ENCODE measurements at regions of chr5 and their contacts with region 1.

Region 1: DNA sequence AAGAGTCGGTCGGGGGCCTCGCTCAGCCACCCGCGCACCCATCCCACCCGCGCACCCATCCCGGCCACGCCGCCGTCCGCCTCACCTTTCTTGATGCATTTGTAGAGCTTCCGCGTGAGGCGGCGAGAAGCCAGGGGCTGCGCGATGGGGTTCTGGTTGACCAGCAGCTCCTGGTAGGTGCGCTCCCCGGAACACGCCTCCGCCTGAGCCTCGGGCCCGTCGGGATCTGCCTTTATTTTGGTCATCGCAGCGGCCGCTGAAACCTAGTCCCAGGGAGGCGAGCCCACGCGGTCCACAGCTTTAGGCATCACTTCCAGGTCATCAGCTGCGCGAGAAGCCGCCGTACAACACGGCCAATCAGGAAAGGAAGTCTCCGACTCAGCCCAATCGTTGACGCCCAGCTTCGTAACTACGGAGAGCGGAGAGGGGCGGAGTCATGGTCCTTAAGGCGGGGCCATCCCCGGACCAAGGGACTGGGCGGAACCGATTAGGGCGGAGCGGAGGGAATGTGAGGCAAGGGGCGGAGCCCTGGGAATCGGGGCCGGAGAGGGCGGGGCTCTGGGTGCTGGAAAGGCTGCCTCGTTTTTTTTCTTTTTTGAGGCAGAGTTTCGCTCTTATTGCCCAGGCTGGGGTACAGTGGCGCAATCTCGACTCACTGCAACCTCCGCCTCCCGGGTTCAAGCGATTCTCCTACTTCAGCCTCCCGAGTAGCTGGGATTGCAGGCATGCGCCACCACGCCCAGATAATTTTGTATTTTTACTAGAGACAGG is at the start of gene NHP2:
- DNase-seq: peak; percentile 92 to 98 (median 97)
- ATAC-seq: peak; percentile 99
- H3K4me3 ChIP-seq: peak within 1 kb of the TSS; percentile 81 to 94
- H3K4me3 Mint-ChIP-seq: peak within 1 kb of the TSS; percentile 97
- H3K27ac ChIP-seq: peak within 1 kb of the TSS; percentile 51 to 62
- H3K27ac Mint-ChIP-seq: peak within 1 kb of the TSS; percentile 92
- H3K4me1 ChIP-seq: peaks cover 12% of the 10 kb centered on the region
- H3K4me1 Mint-ChIP-seq: peaks cover 26% of the 10 kb centered on the region
- H3K27me3 ChIP-seq: no peaks in the 10 kb centered on the region
- H3K27me3 Mint-ChIP-seq: no peaks in the 10 kb centered on the region
- CTCF ChIP-seq: no peak
- total RNA-seq, gene NHP2: 48.8 to 49.6 TPM

Region 2: DNA sequence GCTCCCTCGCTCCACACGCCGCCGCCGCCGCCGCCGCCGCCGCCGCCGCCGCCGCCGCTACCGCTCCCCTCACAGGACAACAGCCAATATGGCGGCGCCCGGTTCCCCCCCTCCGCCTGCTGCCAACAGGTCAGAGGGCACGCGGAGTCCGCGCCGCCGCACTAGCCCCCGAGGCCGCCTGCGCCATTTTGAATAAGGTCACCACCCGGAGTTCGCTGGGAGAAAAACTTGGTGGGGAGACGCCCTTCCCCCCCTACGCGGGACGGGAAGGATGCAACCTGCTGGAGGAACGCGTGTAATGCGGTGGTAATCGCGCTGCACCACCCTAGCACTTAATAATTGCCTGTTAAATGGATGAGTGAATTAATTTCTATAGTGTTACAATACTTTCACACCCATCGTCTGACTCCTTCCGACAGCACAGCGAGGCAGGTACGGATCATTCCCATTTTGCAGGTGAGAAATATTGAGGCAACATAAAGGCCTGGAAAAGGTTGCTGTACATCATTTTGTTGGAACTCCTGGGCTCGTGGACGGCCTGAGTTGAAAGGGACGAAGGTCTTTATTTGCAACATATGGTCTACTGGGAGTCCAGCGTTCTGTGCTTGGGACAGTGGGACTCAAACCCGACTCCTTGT is 599.2 kb before region 1 on chr5 and contains the start of gene FAM193B:
- CTCF ChIA-PET with region 1: no interaction called
- POLR2A ChIA-PET with region 1: no interaction called
- intact Hi-C with region 1: loop called in 1 of 2 experiments (anchors 5 kb)
- DNase-seq: peak; percentile 88 to 97 (median 94)
- ATAC-seq: peak; percentile 99
- H3K4me3 ChIP-seq: peak within 1 kb of the TSS; percentile 62 to 80
- H3K4me3 Mint-ChIP-seq: peak within 1 kb of the TSS; percentile 89
- H3K27ac ChIP-seq: peak within 1 kb of the TSS; percentile 38 to 49
- H3K27ac Mint-ChIP-seq: peak within 1 kb of the TSS; percentile 82
- H3K4me1 ChIP-seq: peaks cover 20% of the 10 kb centered on the region
- H3K4me1 Mint-ChIP-seq: peaks cover 34% of the 10 kb centered on the region
- H3K27me3 ChIP-seq: no peaks in the 10 kb centered on the region
- H3K27me3 Mint-ChIP-seq: no peaks in the 10 kb centered on the region
- CTCF ChIP-seq: no peak
- total RNA-seq, gene FAM193B: 136 to 141 TPM

Region 3: GRCh38 chr5:178113199-178113787 is 40.5 kb before region 1 on chr5 and contains the start of gene N4BP3:
- CTCF ChIA-PET with region 1: interaction called, 3 read pairs
- POLR2A ChIA-PET with region 1: interaction called, 5 read pairs
- intact Hi-C with region 1: loop called (anchors 1 kb)
- DNase-seq: peak; percentile 60 to 91 (median 81)
- ATAC-seq: peak; percentile 44
- H3K4me3 ChIP-seq: peak within 1 kb of the TSS; percentile 54 to 88
- H3K4me3 Mint-ChIP-seq: peak within 1 kb of the TSS; percentile 90
- H3K27ac ChIP-seq: peak within 1 kb of the TSS; percentile 45 to 51
- H3K27ac Mint-ChIP-seq: peak within 1 kb of the TSS; percentile 93
- H3K4me1 ChIP-seq: peaks cover 45% of the 10 kb centered on the region
- H3K4me1 Mint-ChIP-seq: peaks cover 42% of the 10 kb centered on the region
- H3K27me3 ChIP-seq: no peaks in the 10 kb centered on the region
- H3K27me3 Mint-ChIP-seq: no peaks in the 10 kb centered on the region
- CTCF ChIP-seq: no peak
- total RNA-seq, gene N4BP3: 17.3 to 17.9 TPM

Region 4: DNA sequence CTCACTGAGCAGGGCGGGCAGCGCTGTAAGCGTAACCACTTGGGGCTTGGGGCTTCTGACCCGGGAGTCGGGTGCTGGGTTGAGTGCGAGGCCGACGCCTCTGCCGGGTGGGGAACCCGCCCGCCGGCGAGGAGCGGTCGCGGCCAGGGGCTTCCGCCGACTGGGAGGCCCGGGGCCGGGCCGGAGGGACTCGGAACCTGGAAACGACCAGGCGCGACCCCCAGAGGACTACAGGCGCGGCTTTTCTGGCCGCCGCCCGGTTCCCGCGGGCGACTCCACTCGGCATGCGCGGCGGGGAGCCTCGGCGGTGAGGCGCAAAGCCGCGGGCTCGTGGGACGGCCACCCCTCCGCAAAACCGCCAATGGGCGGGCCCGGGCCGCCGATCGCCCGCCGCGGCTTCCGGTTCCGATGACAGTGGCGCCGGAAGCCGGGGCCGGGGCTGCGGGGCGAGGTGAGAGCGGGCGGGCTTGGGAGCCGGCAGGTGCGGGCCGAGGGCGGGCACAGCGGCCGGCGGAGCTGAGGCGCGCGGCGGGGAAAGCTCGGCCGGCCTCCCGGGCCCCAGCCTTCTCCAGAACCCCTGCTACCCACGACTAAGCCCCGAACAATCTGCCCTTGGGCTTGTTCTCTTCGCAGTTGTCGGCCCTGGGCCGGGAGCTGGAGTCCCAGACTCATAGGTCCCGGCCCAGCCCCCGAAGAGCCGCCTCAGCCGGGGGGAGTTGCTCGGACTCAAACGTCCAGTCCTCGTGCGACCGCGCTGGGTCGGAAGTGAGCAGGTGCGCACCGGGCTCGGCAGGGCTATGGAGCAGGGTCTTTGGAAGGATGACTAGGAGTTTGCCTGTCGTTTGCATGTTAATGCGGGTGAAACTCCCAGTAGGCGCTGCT is 22.9 kb before region 1 on chr5 and contains the start of gene RMND5B:
- CTCF ChIA-PET with region 1: interaction called, 3 read pairs
- POLR2A ChIA-PET with region 1: interaction called, 6 read pairs
- intact Hi-C with region 1: loop called in 1 of 2 experiments (anchors 1 kb)
- DNase-seq: peak; percentile 56 to 88 (median 76)
- ATAC-seq: peak; percentile 82
- H3K4me3 ChIP-seq: peak within 1 kb of the TSS; percentile 66 to 85
- H3K4me3 Mint-ChIP-seq: peak within 1 kb of the TSS; percentile 83
- H3K27ac ChIP-seq: peak within 1 kb of the TSS; percentile 66 to 69
- H3K27ac Mint-ChIP-seq: peak within 1 kb of the TSS; percentile 75
- H3K4me1 ChIP-seq: peaks cover 20% of the 10 kb centered on the region
- H3K4me1 Mint-ChIP-seq: peaks cover 33% of the 10 kb centered on the region
- H3K27me3 ChIP-seq: no peaks in the 10 kb centered on the region
- H3K27me3 Mint-ChIP-seq: no peaks in the 10 kb centered on the region
- CTCF ChIP-seq: no peak
- total RNA-seq, gene RMND5B: 9.3 to 12.6 TPM

Region 5: DNA sequence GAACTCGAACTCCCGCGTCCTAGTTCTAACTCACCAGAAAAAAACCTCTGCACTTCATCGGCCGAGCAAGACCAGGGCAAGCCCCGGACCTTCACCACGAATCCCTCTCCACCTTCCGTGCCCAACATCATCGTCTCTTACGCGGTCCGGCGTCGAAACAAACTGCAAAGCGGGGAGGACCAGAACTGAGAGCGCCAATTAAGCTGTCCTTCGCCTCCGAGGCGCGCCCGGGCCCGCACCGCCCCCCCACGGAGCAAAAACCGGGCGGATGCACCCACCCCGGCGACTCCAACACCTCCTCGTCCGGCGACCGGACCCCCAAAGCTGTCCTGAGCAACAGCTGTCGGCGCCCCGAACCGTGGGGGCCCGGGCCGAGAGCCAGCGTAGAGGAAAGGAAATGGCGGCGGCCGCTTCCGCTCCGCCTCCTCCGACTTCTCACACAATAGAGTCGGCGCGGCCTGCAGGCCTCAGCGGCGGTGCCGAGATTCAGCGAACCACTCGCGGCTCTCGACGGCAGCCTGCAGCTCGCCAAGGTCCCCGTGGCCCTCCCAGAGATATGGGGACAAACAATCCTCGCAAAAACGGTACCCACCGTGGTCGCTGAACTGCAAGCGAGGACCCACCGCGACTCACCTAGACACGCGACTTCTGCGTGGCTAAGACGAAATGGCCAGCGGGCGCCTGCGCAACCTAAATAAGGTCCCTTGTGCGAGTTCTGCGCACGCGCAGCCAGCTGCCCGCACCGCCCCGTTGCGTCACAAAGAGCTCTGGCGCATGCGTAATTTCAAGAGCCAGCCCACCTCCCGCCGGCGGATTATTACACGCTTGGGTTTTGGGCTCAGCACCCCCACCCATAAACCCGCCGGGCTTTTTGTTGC is 1469.5 kb after region 1 on chr5 and contains the start of gene HNRNPH1:
- CTCF ChIA-PET with region 1: no interaction called
- POLR2A ChIA-PET with region 1: no interaction called
- intact Hi-C with region 1: loop called in 1 of 2 experiments (anchors 10 kb)
- DNase-seq: peak; percentile 97 to 99 (median 98)
- ATAC-seq: peak; percentile 74
- H3K4me3 ChIP-seq: peak within 1 kb of the TSS; percentile 86 to 98
- H3K4me3 Mint-ChIP-seq: peak within 1 kb of the TSS; percentile 95
- H3K27ac ChIP-seq: peak within 1 kb of the TSS; percentile 97 to 99
- H3K27ac Mint-ChIP-seq: peak within 1 kb of the TSS; percentile 98
- H3K4me1 ChIP-seq: peaks cover 48% of the 10 kb centered on the region
- H3K4me1 Mint-ChIP-seq: peaks cover 44% of the 10 kb centered on the region
- H3K27me3 ChIP-seq: no peaks in the 10 kb centered on the region
- H3K27me3 Mint-ChIP-seq: no peaks in the 10 kb centered on the region
- CTCF ChIP-seq: no peak
- total RNA-seq, gene HNRNPH1: 2,565 to 2,635 TPM